Head of caudate nucleus (tissue), 42 donors: ENCODE measurements at regions of chr1 and their contacts with region 1.

Region 1: DNA sequence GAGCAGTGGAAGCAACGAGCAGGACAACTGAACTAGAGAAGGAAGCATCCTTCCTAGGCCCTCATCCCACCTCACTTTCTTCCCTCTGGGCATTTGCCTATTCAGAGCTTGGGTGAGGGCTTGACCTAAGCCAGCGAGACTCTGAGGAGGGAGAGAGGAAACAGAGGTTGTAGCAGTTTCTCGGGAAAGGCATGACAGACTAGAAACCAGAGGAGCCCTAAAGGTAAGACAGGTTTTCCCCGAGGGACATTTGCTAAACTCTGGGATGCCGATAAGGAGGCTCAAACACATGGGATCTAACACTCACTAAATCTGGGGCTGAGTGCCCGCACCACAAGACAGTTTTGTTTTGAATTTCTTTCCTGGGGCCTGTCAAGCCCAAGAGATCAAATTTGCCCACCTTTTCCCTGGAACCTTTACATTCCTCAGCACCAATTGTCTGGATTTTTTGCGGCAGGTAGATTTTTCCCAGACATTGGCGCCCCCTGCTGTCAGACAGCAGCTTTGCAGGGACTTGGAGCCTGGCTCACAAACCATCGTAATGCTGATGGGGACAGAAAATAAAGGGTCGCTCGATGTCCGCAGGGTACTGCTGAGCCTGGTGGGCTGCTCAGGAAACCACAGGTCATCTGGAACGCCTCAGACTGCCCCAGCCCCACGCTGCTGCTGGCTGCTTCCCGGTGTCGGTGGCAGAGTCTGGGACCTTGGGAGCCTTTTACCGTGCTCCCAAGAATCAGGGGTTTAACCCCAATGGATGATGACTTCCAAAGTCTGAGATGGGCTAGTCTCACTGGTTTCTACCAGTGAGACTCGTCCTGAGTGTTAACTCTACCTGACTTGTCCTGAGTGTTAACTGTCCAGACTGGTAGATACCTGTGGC is 23.4 kb upstream of the TSPAN2 start:
- DNase-seq: peak in 38 of 42 donors; percentile 15 to 78 (median 50)

Region 2: DNA sequence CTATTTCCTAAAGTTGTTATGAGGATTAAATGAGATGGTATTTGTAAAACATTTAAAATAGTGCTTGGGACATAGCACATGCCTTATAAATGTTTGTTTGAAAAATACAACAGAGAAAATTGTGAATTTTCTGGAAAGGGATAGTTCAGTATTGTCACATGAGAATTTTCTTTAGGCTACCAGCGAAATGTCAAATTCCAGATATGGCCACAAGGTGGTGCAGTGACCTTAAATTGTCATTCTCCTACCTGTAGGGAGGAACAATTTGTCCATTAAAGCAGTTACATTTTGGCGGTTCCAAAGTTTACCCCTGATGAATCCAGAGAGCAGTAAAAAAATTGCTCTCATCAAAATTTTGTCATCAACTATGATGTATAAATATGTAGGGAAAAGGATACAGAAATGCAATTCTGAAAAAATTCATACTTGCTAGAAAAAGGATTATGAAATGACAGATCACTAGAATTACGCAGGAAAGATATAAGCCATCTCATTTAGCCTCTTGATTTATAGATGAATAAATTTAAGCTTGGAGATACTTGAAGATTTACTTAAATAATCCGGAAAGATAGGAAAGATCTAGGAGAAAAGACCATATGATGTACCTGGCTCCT is 133.4 kb before region 1 on chr1:
- intact Hi-C with region 1: loop called (anchors 5 kb)
- DNase-seq: peak in 41 of 42 donors; percentile 3 to 86 (median 64)